ENCODE measurements at regions of chr19 and their contacts with region 1.

Region 1: GRCh38 chr19:16572332-16573211 is at the start of gene SLC35E1:
- DNase-seq: peak; percentile 98
- ATAC-seq: peak; percentile 95
- H3K4me3 ChIP-seq: peak within 1 kb of the TSS; percentile 91
- H3K27ac ChIP-seq: peak within 1 kb of the TSS; percentile 77
- H3K4me1 ChIP-seq: peaks cover 43% of the 10 kb centered on the region
- H3K27me3 ChIP-seq: no peaks in the 10 kb centered on the region
- CTCF ChIP-seq: no peak
- total RNA-seq, gene SLC35E1: 52.6 and 62.3 TPM in 2 replicates

Region 2: GRCh38 chr19:16608290-16608739 is 35.7 kb after region 1 on chr19:
- CTCF ChIA-PET with region 1: no interaction called
- POLR2A ChIA-PET with region 1: no interaction called
- intact Hi-C with region 1: loop called (anchors 1 kb)
- DNase-seq: peak; percentile 61
- ATAC-seq: peak; percentile 88
- H3K4me3 ChIP-seq: no peak overlapping the region
- H3K27ac ChIP-seq: no peak overlapping the region
- H3K4me1 ChIP-seq: peaks cover 13% of the 10 kb centered on the region
- H3K27me3 ChIP-seq: no peaks in the 10 kb centered on the region
- CTCF ChIP-seq: no peak